ENCODE measurements at regions of chr3 and their contacts with region 1.

Region 1: DNA sequence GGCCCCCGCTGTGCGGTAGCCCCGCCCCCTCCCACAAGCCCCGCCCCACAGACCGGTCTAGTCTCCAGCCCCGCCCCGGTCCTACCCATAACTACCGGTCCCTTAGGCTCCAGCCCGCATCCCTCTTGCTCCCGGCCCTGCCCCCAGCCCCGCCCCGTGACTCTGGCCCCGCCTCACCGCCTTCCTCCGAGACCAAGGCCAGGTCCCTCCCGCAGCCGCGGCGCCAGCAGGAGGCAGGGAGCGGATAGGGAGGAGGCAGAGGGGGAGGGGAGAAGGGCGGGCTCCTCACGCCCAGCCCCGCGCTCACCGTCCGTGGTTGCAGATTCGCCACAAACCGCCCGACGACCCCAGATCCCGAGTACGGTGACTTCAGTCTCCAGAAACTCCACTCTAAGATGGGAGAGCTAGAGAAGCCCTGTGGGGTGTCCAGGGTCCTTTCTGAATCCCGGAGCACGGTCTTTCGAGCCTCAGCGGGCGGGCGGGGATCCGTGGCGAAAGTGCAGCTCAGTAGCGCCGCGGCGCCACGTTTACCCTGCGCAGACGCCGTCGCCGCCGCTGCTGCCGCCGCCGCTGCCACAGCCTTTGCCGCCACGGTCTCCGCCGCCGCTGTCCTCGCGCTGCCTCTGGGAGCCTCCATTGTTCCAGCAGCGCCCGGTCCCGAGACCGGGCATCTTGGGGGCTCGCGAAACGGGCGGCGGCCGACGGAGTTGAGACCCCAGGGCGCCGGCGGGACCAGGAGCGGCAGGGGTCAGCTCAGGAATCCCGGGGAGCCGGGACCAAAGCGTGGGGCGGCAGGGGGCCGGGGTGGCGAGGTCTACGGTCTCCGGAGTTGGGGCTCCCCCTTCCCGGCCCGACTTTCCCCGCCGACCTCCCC is at the start of gene BRPF1:
- DNase-seq: peak; percentile 100
- H3K4me3 ChIP-seq: peak within 1 kb of the TSS; percentile 95 to 100 (median 98)
- H3K27ac ChIP-seq: peak within 1 kb of the TSS; percentile 87 to 98 (median 94)
- H3K4me1 ChIP-seq: peaks cover 0 to 32% (median 29%) of the 10 kb centered on the region in 4 donors
- H3K27me3 ChIP-seq: no peaks in the 10 kb centered on the region
- CTCF ChIP-seq: no peak
- EP300 ChIP-seq: peak in 1 of 4 donors; percentile 6
- POLR2A ChIP-seq: peak; percentile 47 to 51
- total RNA-seq, gene BRPF1: 12.6 to 18.6 (median 13.9) TPM

Region 2: DNA sequence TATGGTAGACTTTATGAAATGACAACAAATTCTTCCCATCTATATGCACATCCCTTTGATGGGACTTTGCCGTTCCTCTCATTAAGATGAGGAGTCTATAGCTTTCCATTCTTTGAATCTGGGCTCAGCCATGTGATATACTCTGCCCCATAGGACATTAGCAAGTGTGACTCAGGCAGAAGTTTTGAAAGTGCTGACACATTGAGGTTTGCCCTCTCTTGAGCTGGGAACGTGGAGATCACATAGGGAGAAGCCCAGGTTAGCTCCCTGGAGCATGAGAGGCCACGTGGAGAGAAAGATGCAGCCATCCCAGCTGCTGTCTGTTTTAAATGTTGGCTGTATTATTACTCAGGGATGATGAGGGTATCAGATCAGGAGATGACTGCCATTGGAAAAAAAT is 894.3 kb before region 1 on chr3:
- intact Hi-C with region 1: no loop called
- DNase-seq: no peak
- H3K4me3 ChIP-seq: no peak overlapping the region
- H3K27ac ChIP-seq: no peak overlapping the region
- H3K4me1 ChIP-seq: no peaks in the 10 kb centered on the region
- H3K27me3 ChIP-seq: no peaks in the 10 kb centered on the region
- CTCF ChIP-seq: no peak
- EP300 ChIP-seq: no peak
- POLR2A ChIP-seq: no peak

Region 3: DNA sequence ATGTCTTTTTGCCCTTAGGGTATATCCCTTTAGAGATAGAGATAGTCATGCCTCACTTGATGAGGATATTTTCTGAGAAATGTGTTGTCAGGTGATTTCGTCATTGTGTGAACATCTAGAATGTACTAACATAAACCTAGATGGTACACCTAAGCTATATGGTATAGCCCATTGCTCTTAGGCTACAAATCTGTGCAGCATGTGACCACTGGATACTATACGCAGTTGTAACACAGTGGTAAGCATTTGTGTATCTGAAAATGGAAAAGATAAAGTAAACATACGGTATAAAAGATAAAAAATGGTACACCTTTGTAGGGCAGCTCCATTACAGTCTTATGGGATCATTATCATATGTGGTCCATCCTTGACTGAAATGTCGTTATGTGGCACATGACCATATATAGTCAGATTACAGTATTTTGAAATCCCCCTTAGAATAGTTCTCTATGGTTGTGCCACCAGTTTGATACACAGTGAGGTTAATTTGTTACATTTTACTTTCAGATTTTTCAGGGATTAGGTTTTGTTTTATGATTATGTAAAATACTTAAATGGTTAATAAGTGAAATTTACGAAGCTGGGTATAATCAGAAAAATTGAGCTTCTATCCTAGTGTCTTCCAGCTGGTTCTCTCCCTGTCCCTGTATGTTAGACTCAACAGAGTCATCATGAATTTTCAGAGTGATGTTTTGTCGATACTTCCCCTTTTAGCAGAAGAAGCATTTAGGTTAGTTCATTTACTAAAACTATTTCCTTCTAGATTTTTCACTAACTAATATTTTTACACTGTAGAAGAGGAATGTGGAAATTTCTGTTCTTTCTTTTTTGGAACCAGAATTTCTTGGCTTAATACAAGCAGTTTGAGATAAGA is 321.2 kb before region 1 on chr3:
- intact Hi-C with region 1: no loop called
- DNase-seq: no peak
- H3K4me3 ChIP-seq: no peak overlapping the region
- H3K27ac ChIP-seq: peak overlapping the region in 2 of 4 donors; percentile 54 to 99
- H3K4me1 ChIP-seq: peaks cover 0 to 87% (median 79%) of the 10 kb centered on the region in 4 donors
- H3K27me3 ChIP-seq: no peaks in the 10 kb centered on the region
- CTCF ChIP-seq: no peak
- EP300 ChIP-seq: no peak
- POLR2A ChIP-seq: no peak

Region 4: GRCh38 chr3:9649791-9650521 is 81.5 kb before region 1 on chr3:
- intact Hi-C with region 1: loop called (anchors 2 kb)
- DNase-seq: no peak
- H3K4me3 ChIP-seq: peak overlapping the region; percentile 98 to 100 (median 99)
- H3K27ac ChIP-seq: peak overlapping the region; percentile 83 to 87 (median 86)
- H3K4me1 ChIP-seq: peaks cover 0 to 23% (median 16%) of the 10 kb centered on the region in 4 donors
- H3K27me3 ChIP-seq: no peaks in the 10 kb centered on the region
- CTCF ChIP-seq: no peak
- EP300 ChIP-seq: no peak
- POLR2A ChIP-seq: no peak

Region 5: GRCh38 chr3:9749645-9750555 is 18.5 kb after region 1 on chr3 and contains the start of gene OGG1:
- intact Hi-C with region 1: loop called (anchors 1 kb)
- DNase-seq: peak; percentile 99
- H3K4me3 ChIP-seq: peak within 1 kb of the TSS; percentile 57 to 71 (median 70)
- H3K27ac ChIP-seq: peak within 1 kb of the TSS; percentile 85 to 94 (median 92)
- H3K4me1 ChIP-seq: peaks cover 0 to 35% (median 28%) of the 10 kb centered on the region in 4 donors
- H3K27me3 ChIP-seq: no peaks in the 10 kb centered on the region
- CTCF ChIP-seq: peak in 1 of 4 experiments; percentile 22
- EP300 ChIP-seq: no peak
- POLR2A ChIP-seq: peak in 1 of 2 donors; percentile 49
- total RNA-seq, gene OGG1: 22.5 to 34.6 (median 31.4) TPM

Region 6: DNA sequence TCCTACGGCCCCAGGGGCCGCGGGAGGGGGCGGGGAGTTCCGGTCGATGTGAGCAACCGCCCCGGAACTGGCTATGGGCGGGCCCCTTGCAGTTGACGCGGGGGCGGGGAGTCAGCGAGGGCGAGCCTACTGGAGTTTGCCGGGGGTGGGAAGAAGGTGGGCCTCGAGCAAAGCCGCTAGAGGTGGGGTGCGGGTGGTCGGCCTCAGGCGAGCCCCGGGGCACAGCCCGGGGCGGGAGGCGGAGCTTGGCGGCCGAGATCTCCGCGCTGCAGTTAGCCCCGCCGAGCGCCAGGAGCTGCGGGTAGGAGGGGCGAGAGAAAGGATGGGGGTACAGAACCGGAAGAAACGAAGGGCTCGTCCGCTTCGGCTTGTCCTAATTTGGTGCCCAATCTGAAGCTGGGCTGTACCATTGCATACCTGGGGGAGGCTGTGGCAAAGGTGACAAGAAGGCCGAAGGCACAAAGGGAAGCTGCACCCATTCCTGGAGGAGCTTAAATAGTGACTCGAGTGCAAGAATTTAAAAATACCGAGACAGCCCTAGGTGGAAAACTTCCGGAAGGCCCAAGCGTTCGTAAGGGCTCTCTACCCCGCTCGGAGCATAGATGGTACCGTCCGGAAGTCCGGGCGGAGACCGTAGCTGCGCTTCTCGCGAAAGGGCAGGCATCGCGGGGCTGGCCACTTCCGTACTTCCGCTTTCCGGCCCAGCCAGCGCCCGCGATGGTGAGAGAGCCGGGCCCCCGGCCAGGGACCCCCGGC is 61.1 kb after region 1 on chr3 and contains the starts of genes ARPC4 and TADA3:
- intact Hi-C with region 1: loop called (anchors 5 kb)
- DNase-seq: peak; percentile 96
- H3K4me3 ChIP-seq: peak within 1 kb of the TSS; percentile 60 to 99 (median 84)
- H3K27ac ChIP-seq: peak within 1 kb of the TSS; percentile 86 to 98 (median 96)
- H3K4me1 ChIP-seq: peaks cover 0 to 40% (median 36%) of the 10 kb centered on the region in 4 donors
- H3K27me3 ChIP-seq: no peaks in the 10 kb centered on the region
- CTCF ChIP-seq: peak in 3 of 4 experiments; percentile 13 to 23 (median 15)
- EP300 ChIP-seq: peak in 1 of 4 donors; percentile 44
- POLR2A ChIP-seq: peak; percentile 55 to 57
- total RNA-seq, gene ARPC4: 75.6 to 150 (median 128) TPM
- total RNA-seq, gene TADA3: 53.2 to 72.9 (median 67.6) TPM

Region 7: GRCh38 chr3:10026084-10026890 is 294.8 kb after region 1 on chr3 and contains the start of gene FANCD2:
- intact Hi-C with region 1: loop called (anchors 5 kb)
- DNase-seq: peak; percentile 92
- H3K4me3 ChIP-seq: peak within 1 kb of the TSS; percentile 73 to 93 (median 83)
- H3K27ac ChIP-seq: peak within 1 kb of the TSS; percentile 77 to 85 (median 81)
- H3K4me1 ChIP-seq: peaks cover 0 to 28% (median 25%) of the 10 kb centered on the region in 4 donors
- H3K27me3 ChIP-seq: no peaks in the 10 kb centered on the region
- CTCF ChIP-seq: no peak
- EP300 ChIP-seq: peak in 1 of 4 donors; percentile 60
- POLR2A ChIP-seq: peak; percentile 74 to 78
- total RNA-seq, gene FANCD2: 1.5 to 5.8 (median 3.1) TPM